PC-9 (cell line): ENCODE measurements at regions of chr17 and their contacts with region 1.

Region 1: GRCh38 chr17:68435876-68436842 is 21.1 kb downstream of the WIPI1 start:
- DNase-seq: peak; percentile 74 to 87
- H3K4me3 ChIP-seq: peak overlapping the region; percentile 31; the same call in 1 of the 2 replicates
- H3K27ac ChIP-seq: peak overlapping the region; percentile 80
- H3K4me1 ChIP-seq: peaks cover 7% of the 10 kb centered on the region; the same call in 1 of the 2 replicates
- H3K27me3 ChIP-seq: no peaks in the 10 kb centered on the region
- CTCF ChIP-seq: peak; percentile 94

Region 2: DNA sequence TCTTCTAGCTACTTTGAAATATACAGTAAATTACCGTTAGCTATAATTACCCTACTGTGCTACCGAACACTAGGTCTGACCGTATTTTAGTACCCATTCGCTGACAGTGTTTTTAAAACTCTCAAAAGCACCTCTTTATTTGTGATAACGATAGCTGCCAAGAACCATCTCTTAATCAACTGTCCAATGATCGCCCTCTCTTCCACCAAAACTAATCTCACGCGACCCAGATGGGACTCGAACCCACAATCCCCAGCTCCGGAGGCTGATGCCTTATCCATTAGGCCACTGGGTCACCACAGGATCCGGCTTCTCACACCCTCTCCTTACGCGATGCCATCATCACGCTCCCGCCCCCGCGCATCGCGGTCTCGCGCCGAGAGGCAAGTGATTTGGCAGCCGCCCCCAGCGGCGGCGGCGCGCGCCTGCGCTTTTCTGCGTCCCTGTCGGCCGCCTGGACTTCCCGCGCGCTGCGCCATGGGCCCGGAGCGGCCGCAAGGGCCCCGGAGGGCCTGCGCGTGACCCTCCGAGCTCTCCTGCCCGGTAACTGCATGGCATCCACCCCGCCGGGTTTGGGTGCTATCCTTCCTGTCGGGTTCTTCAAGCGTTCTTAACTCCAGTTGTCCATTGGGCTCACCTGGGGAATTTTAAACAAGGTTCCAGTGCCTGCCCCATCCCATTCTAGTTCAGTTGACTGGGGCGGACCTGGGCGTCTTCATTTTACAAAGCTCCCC is 416.3 kb before region 1 on chr17:
- CTCF ChIA-PET with region 1: no interaction called
- POLR2A ChIA-PET with region 1: no interaction called
- intact Hi-C with region 1: loop called (anchors 1 kb)
- DNase-seq: peak; percentile 90 to 98
- H3K4me3 ChIP-seq: peak overlapping the region; percentile 71
- H3K27ac ChIP-seq: 0 out of 2 replicates have a peak overlapping the region, but pooled peaks have one; percentile 14
- H3K4me1 ChIP-seq: peaks cover 13% of the 10 kb centered on the region
- H3K27me3 ChIP-seq: no peaks in the 10 kb centered on the region
- CTCF ChIP-seq: peak; percentile 47; the same call in 1 of the 2 replicates

Region 3: DNA sequence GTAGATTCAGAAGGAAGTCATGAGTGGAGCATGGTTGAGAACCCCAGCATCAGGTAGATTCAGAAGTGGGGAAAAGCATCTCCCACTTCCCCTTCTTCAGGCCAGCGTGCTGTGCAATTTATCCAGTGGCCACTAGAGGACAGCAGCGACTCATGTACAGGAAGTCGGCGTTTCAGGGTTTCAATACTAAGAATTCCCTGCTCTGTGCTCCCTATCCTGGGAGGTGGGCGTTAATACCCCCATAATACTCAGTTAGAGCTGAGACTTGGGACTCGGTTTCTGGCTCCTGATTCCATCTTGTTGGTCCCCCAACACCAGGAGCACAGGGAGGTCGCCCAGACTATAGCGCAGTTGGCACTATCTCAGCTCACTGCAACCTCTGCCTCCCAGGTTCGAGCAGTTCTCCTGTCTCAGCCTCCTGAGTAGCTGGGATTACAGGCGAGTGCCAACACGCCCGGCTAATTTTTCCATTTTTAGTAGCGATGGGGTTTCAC is 263.7 kb before region 1 on chr17:
- CTCF ChIA-PET with region 1: interaction called, 3 read pairs
- POLR2A ChIA-PET with region 1: no interaction called
- intact Hi-C with region 1: loop called (anchors 1 kb)
- DNase-seq: peak; percentile 40 to 61
- H3K4me3 ChIP-seq: no peak overlapping the region
- H3K27ac ChIP-seq: no peak overlapping the region
- H3K4me1 ChIP-seq: no peaks in the 10 kb centered on the region
- H3K27me3 ChIP-seq: no peaks in the 10 kb centered on the region
- CTCF ChIP-seq: peak; percentile 98

Region 4: DNA sequence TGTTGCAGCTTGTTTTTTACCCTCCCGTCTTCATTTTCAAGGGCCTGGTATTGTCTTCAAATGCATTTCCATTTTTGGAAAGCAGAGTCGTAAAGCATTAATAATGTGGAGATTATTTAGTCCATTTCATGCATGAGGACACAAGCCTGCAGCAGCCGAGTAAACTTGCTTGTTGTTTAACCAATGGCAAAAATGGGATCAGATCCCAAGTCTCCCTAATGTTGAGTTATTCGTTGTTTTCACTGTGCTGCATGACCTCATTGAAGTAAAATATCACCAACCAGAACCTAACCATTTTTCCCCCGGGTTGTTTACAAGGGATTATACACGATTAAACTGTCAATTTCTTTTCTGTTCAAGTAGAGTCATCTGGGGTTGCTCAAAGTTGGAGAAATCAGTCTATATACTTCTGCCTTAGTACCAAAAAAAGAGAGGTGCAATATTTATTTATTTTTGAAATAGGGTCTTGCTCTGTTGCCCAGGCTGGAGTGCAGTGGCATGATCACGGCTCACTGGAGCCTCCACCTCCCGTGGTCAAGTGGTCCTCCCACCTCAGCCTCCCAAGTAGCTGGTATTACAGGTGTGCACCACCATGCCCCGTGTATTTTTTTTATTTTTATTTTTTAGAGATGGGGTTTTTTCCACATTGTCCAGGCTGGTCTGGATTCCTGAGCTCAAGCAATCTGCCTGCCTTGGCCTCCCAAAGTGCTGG is 176.0 kb before region 1 on chr17:
- CTCF ChIA-PET with region 1: no interaction called
- POLR2A ChIA-PET with region 1: no interaction called
- intact Hi-C with region 1: loop called (anchors 1 kb)
- DNase-seq: no peak
- H3K4me3 ChIP-seq: no peak overlapping the region
- H3K27ac ChIP-seq: no peak overlapping the region
- H3K4me1 ChIP-seq: peaks cover 10% of the 10 kb centered on the region; the same call in 1 of the 2 replicates
- H3K27me3 ChIP-seq: no peaks in the 10 kb centered on the region
- CTCF ChIP-seq: no peak

Region 5: GRCh38 chr17:68398691-68399637 is 37.2 kb before region 1 on chr17:
- CTCF ChIA-PET with region 1: interaction called, 5 read pairs
- POLR2A ChIA-PET with region 1: no interaction called
- intact Hi-C with region 1: loop called (anchors 1 kb)
- DNase-seq: peak; percentile 68 to 73
- H3K4me3 ChIP-seq: no peak overlapping the region
- H3K27ac ChIP-seq: no peak overlapping the region
- H3K4me1 ChIP-seq: peaks cover 18% of the 10 kb centered on the region
- H3K27me3 ChIP-seq: no peaks in the 10 kb centered on the region
- CTCF ChIP-seq: peak; percentile 91

Region 6: GRCh38 chr17:68733241-68734176 is 297.4 kb after region 1 on chr17:
- CTCF ChIA-PET with region 1: no interaction called
- POLR2A ChIA-PET with region 1: no interaction called
- intact Hi-C with region 1: no loop called
- DNase-seq: no peak
- H3K4me3 ChIP-seq: no peak overlapping the region
- H3K27ac ChIP-seq: no peak overlapping the region
- H3K4me1 ChIP-seq: no peaks in the 10 kb centered on the region
- H3K27me3 ChIP-seq: no peaks in the 10 kb centered on the region
- CTCF ChIP-seq: no peak

Region 7: DNA sequence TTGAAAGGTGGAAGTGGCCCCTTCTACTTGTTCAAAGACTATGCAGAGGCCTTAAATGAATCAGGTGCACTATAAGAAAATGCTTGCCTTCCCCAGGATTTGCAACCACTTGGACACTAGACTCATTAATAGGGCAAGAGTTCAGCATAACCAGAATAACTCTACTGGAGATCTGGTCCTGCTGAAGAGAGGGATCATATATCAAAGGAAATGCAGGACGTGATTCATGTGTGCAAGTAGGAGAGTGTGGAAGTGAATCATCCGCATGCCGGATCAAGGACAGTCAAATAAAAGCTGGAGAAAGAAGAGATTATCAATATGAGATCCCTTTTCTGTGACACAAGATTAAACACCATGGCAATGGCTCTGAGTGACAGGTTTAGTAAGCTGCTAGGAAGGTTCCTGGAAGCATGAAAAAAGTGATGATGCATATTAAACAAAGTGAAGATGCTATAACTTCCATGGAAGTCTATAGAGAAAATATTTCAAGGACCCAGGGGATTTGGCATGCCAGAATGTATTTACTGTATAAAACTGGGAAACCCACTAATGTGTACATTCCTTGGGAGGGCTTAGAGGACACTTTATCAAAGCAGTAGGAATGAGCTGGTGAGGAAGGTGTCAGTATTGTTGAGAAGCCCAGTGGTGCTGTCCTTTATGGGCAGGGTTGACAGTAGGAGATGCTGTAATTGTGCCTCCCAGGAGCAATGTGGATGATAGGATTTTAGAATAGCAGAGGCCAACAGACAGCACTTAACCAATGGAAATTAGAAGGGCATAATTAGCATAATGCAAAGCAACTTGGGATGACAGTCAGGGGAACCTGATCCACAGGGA is 385.9 kb after region 1 on chr17:
- CTCF ChIA-PET with region 1: no interaction called
- POLR2A ChIA-PET with region 1: no interaction called
- intact Hi-C with region 1: no loop called
- DNase-seq: peak; percentile 27 to 97
- H3K4me3 ChIP-seq: no peak overlapping the region
- H3K27ac ChIP-seq: peak overlapping the region; percentile 56
- H3K4me1 ChIP-seq: peaks cover 32% of the 10 kb centered on the region
- H3K27me3 ChIP-seq: no peaks in the 10 kb centered on the region
- CTCF ChIP-seq: no peak